Endothelial cell of umbilical vein (primary cell): ENCODE measurements at regions of chr2 and their contacts with region 1.

Region 1: GRCh38 chr2:235669269-235669831 is 175.5 kb downstream of the AGAP1 start:
- DNase-seq: peak; percentile 35
- H3K4me3 ChIP-seq: peak overlapping the region in 1 of 3 experiments; percentile 48
- H3K27ac ChIP-seq: no peak overlapping the region
- H3K4me1 ChIP-seq: peaks cover 2% of the 10 kb centered on the region
- H3K27me3 ChIP-seq: peaks cover 22 to 27% of the 10 kb centered on the region in 2 experiments
- CTCF ChIP-seq: no peak
- POLR2A ChIP-seq: no peak

Region 2: DNA sequence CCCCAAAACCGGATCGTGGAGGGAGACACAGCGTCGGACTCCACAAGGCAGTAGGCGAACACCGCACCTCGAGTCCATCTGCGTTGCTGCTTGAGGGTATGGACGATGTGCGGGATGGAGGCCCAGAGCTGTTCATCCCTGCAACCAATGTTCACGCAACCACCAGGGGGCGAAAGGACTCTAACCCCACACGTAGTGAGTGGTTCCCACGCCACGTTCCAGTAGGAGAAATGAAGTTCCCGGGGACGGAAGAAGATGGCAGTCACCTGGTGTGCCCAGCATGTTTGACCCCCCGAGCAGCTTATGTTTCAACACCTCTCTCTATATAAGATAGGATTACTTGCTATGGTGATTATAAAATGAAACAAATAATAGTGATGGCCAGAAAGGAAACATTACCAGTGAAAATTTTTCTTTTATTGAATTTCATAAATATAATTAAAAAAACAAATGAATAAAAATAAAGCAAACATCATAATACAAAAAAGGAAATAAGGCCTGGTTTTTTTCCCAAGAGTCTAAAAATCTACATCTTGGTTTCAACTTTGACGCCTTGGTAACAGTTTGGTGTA is 533.3 kb before region 1 on chr2:
- CTCF ChIA-PET with region 1: interaction called, 5 read pairs
- POLR2A ChIA-PET with region 1: no interaction called
- dilution Hi-C with region 1: no loop called
- intact Hi-C with region 1: loop called (anchors 10 kb)
- DNase-seq: peak; percentile 63
- H3K4me3 ChIP-seq: no peak overlapping the region
- H3K27ac ChIP-seq: no peak overlapping the region
- H3K4me1 ChIP-seq: peaks cover 2% of the 10 kb centered on the region
- H3K27me3 ChIP-seq: peaks cover 2 to 6% of the 10 kb centered on the region in 2 experiments
- CTCF ChIP-seq: peak; percentile 66 to 79
- POLR2A ChIP-seq: no peak

Region 3: DNA sequence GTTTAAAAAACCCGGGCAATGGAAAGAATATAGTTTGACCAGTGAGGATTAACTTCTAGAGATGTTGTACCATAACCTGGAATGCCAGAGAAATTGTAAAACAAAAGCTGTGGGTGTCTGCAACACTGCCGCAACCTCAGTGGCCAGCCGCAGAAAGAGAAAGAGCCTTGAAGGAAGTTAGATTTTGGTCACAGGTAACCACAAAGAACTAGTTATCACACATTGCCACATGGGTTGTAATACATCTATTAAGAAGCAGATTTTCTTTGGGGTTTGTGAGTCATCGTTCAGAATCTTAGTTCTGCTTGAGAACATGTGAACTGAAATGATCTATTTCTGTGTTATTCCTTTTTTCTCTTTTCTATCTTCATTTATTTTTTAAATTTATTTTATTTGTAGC is 398.4 kb before region 1 on chr2:
- CTCF ChIA-PET with region 1: no interaction called
- POLR2A ChIA-PET with region 1: no interaction called
- dilution Hi-C with region 1: no loop called
- intact Hi-C with region 1: loop called (anchors 10 kb)
- DNase-seq: no peak
- H3K4me3 ChIP-seq: no peak overlapping the region
- H3K27ac ChIP-seq: no peak overlapping the region
- H3K4me1 ChIP-seq: peaks cover 22% of the 10 kb centered on the region
- H3K27me3 ChIP-seq: no peaks in the 10 kb centered on the region
- CTCF ChIP-seq: no peak
- POLR2A ChIP-seq: no peak

Region 4: DNA sequence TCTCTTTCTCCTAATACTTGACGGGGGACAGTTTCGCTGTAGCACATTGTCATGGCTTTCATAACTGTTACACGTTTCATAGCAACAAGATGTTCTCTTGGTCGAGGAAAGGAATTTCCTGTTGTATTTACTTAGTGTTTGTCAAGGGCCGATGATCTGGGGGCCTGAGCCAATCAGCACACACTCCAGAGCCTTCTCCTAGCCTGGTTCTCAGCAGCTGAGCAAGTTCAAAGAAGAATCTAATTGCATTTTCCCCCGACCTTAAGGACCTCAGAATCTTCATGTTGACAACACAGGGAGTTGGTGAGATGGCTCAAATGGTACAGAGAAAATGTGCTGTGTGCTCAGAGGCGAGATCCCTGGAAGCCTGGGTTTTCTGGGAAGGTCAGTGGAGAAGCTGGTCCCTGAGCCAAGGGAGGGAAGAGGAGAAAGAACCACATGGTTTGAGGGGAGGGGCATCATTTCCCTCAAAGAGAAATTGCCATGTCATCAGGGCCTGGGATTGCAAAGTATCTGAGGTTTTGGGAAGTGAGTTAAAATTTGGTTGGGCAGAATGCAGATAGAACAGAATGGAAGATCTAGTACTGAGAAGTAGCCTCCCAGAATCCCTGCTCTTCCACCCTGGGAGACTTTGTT is 252.4 kb before region 1 on chr2:
- CTCF ChIA-PET with region 1: no interaction called
- POLR2A ChIA-PET with region 1: no interaction called
- dilution Hi-C with region 1: no loop called
- intact Hi-C with region 1: no loop called
- DNase-seq: no peak
- H3K4me3 ChIP-seq: no peak overlapping the region
- H3K27ac ChIP-seq: no peak overlapping the region
- H3K4me1 ChIP-seq: no peaks in the 10 kb centered on the region
- H3K27me3 ChIP-seq: no peaks in the 10 kb centered on the region
- CTCF ChIP-seq: no peak
- POLR2A ChIP-seq: no peak